Kidney (tissue), 22 donors: ENCODE measurements at regions of chr1 and their contacts with region 1.

Region 1: DNA sequence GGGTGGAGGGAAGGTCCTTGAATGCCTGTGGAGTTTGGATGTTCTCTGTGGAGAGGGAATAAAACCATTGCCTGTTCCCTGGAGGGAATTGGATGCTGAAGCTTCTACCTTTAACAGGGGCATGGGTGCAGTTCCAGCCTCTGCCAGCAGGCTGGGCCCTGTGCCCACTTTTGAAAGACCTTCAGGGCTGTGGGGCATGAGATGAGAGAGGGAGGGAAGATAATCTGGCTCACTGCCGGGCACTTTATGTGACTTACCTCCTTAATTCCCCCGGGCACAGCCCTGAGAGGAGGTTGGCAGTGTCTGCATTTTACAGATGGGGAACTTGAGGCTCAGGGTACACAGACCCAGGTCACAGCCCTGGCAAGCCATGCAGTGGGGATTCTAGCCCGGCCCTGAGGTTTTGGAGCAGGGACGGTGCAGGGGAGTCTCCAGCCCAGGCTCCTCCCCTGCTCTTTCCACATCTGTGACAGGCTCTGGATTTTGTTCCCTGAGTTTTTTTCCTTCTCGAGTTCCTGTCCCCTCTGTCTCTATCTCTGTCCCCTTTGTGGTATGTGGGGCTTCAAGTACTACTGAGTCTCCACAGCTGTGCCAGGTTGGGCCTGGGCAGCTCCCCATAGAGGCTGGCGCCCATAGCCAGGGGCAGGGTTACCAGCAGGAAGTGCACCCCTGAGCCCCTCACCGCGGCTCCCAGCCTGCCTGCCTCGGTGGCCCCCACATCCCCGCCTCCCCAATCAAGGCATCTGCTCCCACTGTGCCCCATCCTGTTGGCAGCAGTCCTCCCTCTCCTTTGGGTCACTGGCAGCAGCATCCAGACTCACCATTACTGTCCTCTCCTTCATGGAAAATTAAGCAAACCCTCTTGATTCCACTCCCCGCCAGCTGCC is 14.0 kb upstream of the THEMIS2 start:
- DNase-seq: peak; percentile 84 to 92 (median 86)
- H3K4me3 ChIP-seq: no peak overlapping the region
- H3K27ac ChIP-seq: no peak overlapping the region
- H3K4me1 ChIP-seq: peaks cover 0 to 3% (median 0%) of the 10 kb centered on the region in 3 donors
- H3K27me3 ChIP-seq: no peaks in the 10 kb centered on the region
- CTCF ChIP-seq: peak; percentile 98

Region 2: DNA sequence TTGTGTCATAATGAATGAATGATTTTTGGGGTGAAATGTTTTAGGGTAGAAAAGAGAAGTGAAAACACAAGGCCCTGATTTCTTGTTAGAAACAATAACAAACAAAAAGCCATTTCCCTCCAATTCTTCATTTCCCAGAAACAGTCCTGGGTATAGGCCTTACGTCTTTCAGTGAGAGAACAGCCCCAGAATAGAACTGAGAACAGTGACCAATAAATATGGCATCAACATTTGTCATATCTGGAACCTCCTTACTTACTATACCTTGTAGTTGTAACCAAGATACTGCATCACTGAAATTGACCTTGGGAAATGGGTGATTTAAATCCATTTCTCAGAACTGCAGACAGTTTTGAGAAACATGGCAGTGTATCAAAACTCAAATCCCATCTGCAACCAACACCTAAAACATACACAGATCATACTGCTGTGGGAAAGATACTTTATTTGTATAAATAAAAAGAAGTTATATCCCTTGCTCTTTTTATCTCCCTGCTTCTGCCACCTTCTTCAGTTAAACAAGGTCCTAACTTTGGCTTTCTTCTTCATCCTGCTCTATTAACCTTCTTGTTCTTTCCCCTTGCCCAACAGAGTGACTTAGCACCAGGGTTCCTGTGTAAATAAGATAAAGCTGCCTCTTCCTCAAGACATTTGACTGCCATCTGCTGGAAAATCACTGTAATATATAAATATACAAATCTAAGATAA is 121.0 kb after region 1 on chr1:
- intact Hi-C with region 1: loop called (anchors 10 kb)
- DNase-seq: peak in 2 of 5 donors; percentile 53 to 54
- H3K4me3 ChIP-seq: no peak overlapping the region
- H3K27ac ChIP-seq: no peak overlapping the region
- H3K4me1 ChIP-seq: no peaks in the 10 kb centered on the region
- H3K27me3 ChIP-seq: no peaks in the 10 kb centered on the region
- CTCF ChIP-seq: peak; percentile 20